Mucosa of descending colon (tissue), 3 donors: ENCODE measurements at regions of chr3 and their contacts with region 1.

Region 1: DNA sequence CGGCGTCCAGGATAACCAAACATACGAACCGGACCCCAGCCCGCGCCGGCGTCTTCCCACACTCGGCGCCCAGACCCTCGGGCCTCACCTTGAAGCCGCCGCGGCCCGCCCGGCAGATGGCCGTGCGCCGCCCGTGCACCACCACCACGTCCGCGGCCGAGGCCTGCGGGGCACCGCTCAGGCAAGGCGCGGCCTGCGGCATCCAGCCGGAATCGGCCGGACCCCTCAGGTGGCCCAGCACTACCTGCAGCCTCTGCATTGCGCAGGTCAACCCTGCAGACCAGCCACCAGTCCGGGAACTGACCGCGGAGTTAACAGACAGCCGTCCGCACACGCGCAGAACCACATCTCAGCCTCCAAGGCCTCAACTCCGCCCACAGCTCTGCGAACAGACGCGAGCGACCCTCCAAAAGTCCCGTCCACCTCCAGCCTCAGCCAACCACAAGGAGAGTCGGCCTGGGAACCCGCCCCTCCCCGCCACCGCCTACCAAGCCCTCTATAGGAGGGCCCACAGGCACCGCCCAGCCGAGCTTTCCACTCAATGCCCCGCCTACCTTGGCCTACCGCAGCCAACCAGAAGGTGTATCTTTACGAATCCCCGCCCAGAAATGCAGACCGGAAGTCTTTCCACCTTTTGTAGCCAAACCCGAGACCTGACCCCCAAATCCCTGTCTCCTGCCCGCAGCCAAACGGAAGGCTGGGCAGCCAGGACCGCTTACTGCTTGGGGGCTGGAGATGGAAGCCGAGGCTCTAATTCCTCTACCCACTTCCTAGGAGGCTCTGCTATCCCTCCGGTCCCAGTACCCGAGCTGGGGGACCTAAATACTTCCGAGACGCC is at the start of gene ACAA1:
- DNase-seq: peak; percentile 99 to 100 (median 100)
- ATAC-seq: peak; percentile 88
- H3K4me3 ChIP-seq: peak within 1 kb of the TSS; percentile 79
- H3K4me1 ChIP-seq: peaks cover 34% of the 10 kb centered on the region
- CTCF ChIP-seq: no peak
- total RNA-seq, gene ACAA1: 102 to 201 (median 138) TPM

Region 2: GRCh38 chr3:37103103-37103808 is 1033.7 kb before region 1 on chr3:
- intact Hi-C with region 1: no loop called
- DNase-seq: peak in 1 of 3 donors; percentile 21
- ATAC-seq: no peak
- H3K4me3 ChIP-seq: no peak overlapping the region
- H3K4me1 ChIP-seq: peaks cover 6% of the 10 kb centered on the region
- CTCF ChIP-seq: no peak

Region 3: GRCh38 chr3:38039899-38040261 is 97.1 kb before region 1 on chr3:
- intact Hi-C with region 1: loop called in 1 of 2 experiments (anchors 10 kb)
- DNase-seq: peak; percentile 77 to 80 (median 78)
- ATAC-seq: peak; percentile 83
- H3K4me3 ChIP-seq: no peak overlapping the region
- H3K4me1 ChIP-seq: peaks cover 22% of the 10 kb centered on the region
- CTCF ChIP-seq: no peak

Region 4: DNA sequence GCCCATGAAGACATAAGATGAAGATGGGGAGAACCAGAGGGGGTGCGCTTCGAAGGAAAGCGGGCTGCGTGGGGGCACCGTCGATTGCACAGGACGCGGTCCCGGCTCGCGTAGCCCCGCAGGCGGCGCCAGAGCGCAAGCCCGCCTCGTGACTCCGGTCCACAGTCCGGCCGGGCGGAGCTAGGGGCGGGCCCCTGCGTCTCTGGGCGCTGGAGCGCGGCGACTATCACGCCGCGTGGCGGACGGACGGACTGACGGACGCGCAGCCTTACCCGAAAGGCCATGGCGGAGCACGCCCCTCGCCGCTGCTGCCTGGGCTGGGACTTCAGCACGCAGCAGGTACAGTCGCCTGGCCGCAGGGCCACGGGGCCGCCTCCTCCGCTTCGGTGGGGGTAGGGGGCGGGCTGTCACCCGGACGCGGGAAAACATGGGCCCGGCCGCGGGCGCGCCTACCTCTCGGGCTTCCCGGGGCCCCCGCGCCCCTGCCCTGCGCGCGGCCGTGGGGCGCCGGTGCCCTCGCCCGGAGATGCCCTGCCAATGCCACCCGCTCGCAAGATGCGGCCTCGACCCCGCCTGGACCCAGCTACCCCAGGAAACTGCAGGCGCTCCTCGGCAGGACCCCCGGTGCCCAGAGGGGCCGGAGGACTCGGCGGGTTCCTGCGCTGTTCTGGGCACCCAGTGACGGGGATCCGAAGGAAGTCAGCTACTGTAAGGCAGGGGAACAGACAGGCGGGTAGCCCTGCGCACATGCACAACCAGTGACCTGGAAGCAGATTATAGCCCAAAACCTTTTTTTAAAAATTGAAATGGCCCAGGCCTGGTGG is 209.8 kb after region 1 on chr3 and contains the start of gene XYLB:
- intact Hi-C with region 1: no loop called
- DNase-seq: peak; percentile 91 to 94 (median 93)
- ATAC-seq: peak; percentile 99
- H3K4me3 ChIP-seq: peak within 1 kb of the TSS; percentile 51
- H3K4me1 ChIP-seq: peaks cover 4% of the 10 kb centered on the region
- CTCF ChIP-seq: peak; percentile 68
- total RNA-seq, gene XYLB: 9.7 to 27.7 (median 16.3) TPM